Body of pancreas (tissue), 4 donors: ENCODE measurements at regions of chr5 and their contacts with region 1.

Region 1: GRCh38 chr5:62354028-62354874 is 48.2 kb downstream of the KIF2A start:
- DNase-seq: peak in 2 of 4 donors; percentile 31 to 68
- ATAC-seq: peak; percentile 81
- H3K4me3 ChIP-seq: no peak overlapping the region
- H3K27ac ChIP-seq: no peak overlapping the region
- H3K4me1 ChIP-seq: no peaks in the 10 kb centered on the region
- H3K27me3 ChIP-seq: no peaks in the 10 kb centered on the region
- CTCF ChIP-seq: peak; percentile 27 to 81 (median 67)
- POLR2A ChIP-seq: no peak

Region 2: GRCh38 chr5:62214701-62215100 is 139.6 kb before region 1 on chr5:
- intact Hi-C with region 1: loop called (anchors 10 kb)
- DNase-seq: no peak
- ATAC-seq: no peak
- H3K4me3 ChIP-seq: no peak overlapping the region
- H3K27ac ChIP-seq: no peak overlapping the region
- H3K4me1 ChIP-seq: no peaks in the 10 kb centered on the region
- H3K27me3 ChIP-seq: no peaks in the 10 kb centered on the region
- CTCF ChIP-seq: no peak
- POLR2A ChIP-seq: no peak